ENCODE measurements at regions of chr7 and their contacts with region 1.

Region 1: DNA sequence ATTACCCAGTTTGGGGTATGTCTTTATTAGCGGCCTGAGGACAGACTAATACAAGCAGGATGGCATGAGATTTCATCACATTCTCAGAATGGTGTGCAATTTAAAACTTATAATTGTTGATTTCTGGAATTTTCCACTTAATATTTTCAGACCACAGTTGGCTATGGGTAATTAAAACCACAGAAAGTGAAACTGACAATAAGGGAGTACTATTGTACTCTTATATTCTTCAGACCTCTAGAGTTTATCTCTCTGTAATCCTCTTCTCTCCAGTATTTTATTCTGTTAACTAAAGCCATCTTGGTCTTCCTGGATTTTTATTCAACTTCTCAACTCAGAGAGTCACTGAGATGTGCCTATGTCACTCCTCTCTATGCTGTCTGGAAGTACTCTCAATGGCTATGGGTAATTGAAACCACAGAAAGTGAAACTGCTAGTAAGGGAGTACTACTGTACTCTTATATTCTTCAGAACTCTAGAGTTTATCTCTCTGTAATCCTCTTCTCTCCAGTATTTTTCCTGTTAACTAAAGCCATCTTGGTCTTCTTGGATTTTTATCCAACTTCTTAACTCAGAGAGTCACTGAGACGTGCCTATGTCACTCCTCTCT is 118.3 kb downstream of the PPP1R17 start:
- DNase-seq: no peak
- H3K4me3 Mint-ChIP-seq: no peak overlapping the region
- H3K27ac Mint-ChIP-seq: no peak overlapping the region
- H3K4me1 Mint-ChIP-seq: peaks cover 5% of the 10 kb centered on the region
- H3K27me3 Mint-ChIP-seq: peaks cover 18% of the 10 kb centered on the region
- CTCF ChIP-seq: no peak

Region 2: GRCh38 chr7:31763548-31763947 is 41.8 kb before region 1 on chr7:
- CTCF ChIA-PET with region 1: no interaction called
- POLR2A ChIA-PET with region 1: no interaction called
- intact Hi-C with region 1: no loop called
- DNase-seq: no peak
- H3K4me3 Mint-ChIP-seq: no peak overlapping the region
- H3K27ac Mint-ChIP-seq: no peak overlapping the region
- H3K4me1 Mint-ChIP-seq: no peaks in the 10 kb centered on the region
- H3K27me3 Mint-ChIP-seq: no peaks in the 10 kb centered on the region
- CTCF ChIP-seq: peak; percentile 9

Region 3: DNA sequence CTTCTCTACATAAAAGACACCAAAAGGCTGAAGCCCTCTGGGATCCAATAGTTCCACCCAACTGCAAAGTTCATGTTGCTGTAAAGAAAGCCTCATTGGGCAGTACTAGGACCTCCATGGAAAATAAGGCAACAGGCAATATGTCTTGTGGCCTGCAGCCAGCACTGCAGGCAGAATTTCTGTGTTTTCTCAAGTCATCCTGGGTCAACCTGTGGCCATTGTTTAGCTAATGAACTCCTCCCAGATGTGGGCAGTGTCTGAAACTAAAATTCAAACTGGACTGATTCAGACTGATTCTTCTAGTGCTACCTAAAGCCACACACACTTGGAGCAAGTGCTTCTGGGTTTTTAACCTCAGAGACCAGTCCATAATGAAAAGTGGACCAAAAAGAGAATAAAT is 23.2 kb after region 1 on chr7:
- CTCF ChIA-PET with region 1: interaction called, 3 read pairs
- POLR2A ChIA-PET with region 1: no interaction called
- intact Hi-C with region 1: loop called (anchors 1 kb)
- DNase-seq: no peak
- H3K4me3 Mint-ChIP-seq: no peak overlapping the region
- H3K27ac Mint-ChIP-seq: no peak overlapping the region
- H3K4me1 Mint-ChIP-seq: no peaks in the 10 kb centered on the region
- H3K27me3 Mint-ChIP-seq: no peaks in the 10 kb centered on the region
- CTCF ChIP-seq: no peak